H1 (cell line): ENCODE measurements at regions of chr13 and their contacts with region 1.

Region 1: DNA sequence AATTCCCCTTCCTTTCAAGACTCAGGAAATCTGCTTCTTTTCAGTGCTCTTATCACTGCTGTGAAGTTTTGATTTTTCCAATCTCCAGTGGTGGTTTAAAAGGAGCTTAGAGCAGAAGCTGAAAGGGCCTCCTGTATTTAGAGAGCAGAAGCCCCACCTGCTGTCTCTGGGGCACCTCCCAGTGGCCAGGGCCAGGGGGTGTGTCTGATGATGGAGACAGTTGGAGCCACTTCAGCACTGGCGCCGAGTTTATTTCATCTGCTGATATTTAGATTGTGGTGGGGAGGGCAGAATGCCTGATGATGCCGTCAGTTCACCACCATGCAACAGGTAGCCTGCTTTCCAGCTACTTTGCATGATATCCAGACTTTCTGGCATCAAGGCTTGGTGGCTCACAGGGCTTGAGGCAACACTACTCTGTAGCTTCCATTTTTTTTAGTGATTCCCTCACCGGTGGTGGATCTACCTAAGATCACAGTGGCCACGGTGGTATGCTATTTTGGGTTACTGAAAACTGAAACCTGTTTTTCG is 371.9 kb downstream of the KCNRG start:
- DNase-seq: peak in 1 of 2 experiments; percentile 54
- H3K4me3 ChIP-seq: no peak overlapping the region
- H3K27ac ChIP-seq: no peak overlapping the region
- H3K4me1 ChIP-seq: peaks cover 3 to 14% (median 11%) of the 10 kb centered on the region in 4 experiments; a peak in 5 of 7 replicates
- H3K27me3 ChIP-seq: no peaks in the 10 kb centered on the region
- CTCF ChIP-seq: peak; percentile 20 to 32 (median 27); a peak in 3 of 4 replicates
- EP300 ChIP-seq: no peak
- POLR2A ChIP-seq: no peak
- RAD21 ChIP-seq: peak; percentile 43 to 61

Region 2: DNA sequence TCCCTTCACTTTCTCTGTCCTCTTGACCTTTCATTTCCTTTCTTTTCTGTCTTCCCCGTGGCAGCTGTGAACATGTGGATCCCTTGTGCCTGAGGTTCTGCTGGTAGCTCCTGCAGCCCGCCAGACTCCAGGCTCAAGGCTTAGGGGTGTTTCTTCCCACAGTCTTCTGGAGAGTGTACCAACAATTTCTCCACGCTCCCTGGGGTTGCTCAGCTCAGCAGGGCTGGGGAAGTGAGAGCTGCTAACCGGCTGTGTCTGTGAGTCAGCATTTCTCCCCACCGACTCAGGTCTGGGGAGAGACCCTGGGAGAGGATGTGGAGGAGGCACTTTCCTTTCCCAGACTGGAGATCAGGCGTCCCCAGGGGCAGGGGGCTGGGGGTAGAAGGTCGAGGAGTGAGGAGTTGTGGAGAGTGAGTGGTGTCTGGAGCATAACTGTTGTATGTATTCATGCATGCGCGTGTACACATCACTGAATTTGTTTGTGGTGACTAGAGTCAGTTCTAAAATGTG is 178.2 kb before region 1 on chr13:
- CTCF ChIA-PET with region 1: no interaction called
- POLR2A ChIA-PET with region 1: no interaction called
- DNase-seq: peak; percentile 9 to 51
- H3K4me3 ChIP-seq: no peak overlapping the region
- H3K27ac ChIP-seq: no peak overlapping the region
- H3K4me1 ChIP-seq: peaks cover 0 to 7% (median 3%) of the 10 kb centered on the region in 4 experiments; a peak in 4 of 7 replicates
- H3K27me3 ChIP-seq: no peaks in the 10 kb centered on the region
- CTCF ChIP-seq: no peak
- EP300 ChIP-seq: no peak
- POLR2A ChIP-seq: no peak
- RAD21 ChIP-seq: no peak

Region 3: GRCh38 chr13:50376895-50377575 is 10.1 kb before region 1 on chr13:
- CTCF ChIA-PET with region 1: interaction called, 31 read pairs
- POLR2A ChIA-PET with region 1: interaction called, 4 read pairs
- DNase-seq: peak; percentile 21 to 56
- H3K4me3 ChIP-seq: no peak overlapping the region
- H3K27ac ChIP-seq: no peak overlapping the region
- H3K4me1 ChIP-seq: peaks cover 2 to 11% (median 5%) of the 10 kb centered on the region in 4 experiments; a peak in 6 of 7 replicates
- H3K27me3 ChIP-seq: no peaks in the 10 kb centered on the region
- CTCF ChIP-seq: peak; percentile 53 to 65 (median 59)
- EP300 ChIP-seq: no peak
- POLR2A ChIP-seq: no peak
- RAD21 ChIP-seq: peak; percentile 82 to 90